Endothelial cell of umbilical vein (primary cell): ENCODE measurements at regions of chr17 and their contacts with region 1.

Region 1: GRCh38 chr17:20797292-20797691 is 217.8 kb downstream of the CDRT15L2 start:
- DNase-seq: no peak
- H3K4me3 ChIP-seq: no peak overlapping the region
- H3K27ac ChIP-seq: no peak overlapping the region
- H3K4me1 ChIP-seq: no peaks in the 10 kb centered on the region
- H3K27me3 ChIP-seq: no peaks in the 10 kb centered on the region
- CTCF ChIP-seq: no peak
- POLR2A ChIP-seq: no peak

Region 2: DNA sequence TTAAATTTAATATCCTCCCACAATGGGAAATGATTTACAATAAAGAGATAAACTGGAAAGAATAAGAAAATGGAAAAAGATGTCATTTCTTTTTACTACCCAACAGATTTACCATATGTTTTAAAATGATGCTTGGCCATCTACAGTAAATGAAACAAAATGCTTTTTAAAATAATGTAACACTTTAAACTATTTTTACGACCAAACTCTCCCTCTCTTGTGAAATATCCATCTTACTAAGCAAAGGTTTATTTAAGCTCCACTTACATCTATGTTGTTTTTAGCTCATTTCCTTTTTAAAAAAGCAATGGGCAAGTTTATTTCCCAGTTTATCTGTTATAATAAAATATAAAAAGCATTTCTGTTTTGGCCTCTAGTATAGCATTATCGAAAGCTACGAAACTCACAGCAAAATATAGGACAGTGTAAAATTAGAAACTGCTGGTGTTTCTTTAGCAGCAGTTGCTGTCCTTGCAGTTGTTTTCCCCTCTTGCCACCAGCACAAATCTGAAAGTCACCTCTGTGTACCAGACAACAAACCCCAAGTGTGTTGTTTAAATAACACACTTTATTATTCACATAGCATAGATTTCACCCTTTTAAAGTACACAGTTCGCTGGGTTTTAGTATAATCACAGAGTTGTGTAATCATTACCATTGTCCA is 22.7 kb before region 1 on chr17:
- CTCF ChIA-PET with region 1: no interaction called
- POLR2A ChIA-PET with region 1: no interaction called
- dilution Hi-C with region 1: no loop called
- intact Hi-C with region 1: no loop called
- DNase-seq: no peak
- H3K4me3 ChIP-seq: no peak overlapping the region
- H3K27ac ChIP-seq: no peak overlapping the region
- H3K4me1 ChIP-seq: no peaks in the 10 kb centered on the region
- H3K27me3 ChIP-seq: no peaks in the 10 kb centered on the region
- CTCF ChIP-seq: no peak
- POLR2A ChIP-seq: no peak

Region 3: GRCh38 chr17:20825539-20825938 is 28.2 kb after region 1 on chr17:
- CTCF ChIA-PET with region 1: no interaction called
- POLR2A ChIA-PET with region 1: no interaction called
- dilution Hi-C with region 1: no loop called
- intact Hi-C with region 1: no loop called
- DNase-seq: no peak
- H3K4me3 ChIP-seq: no peak overlapping the region
- H3K27ac ChIP-seq: no peak overlapping the region
- H3K4me1 ChIP-seq: no peaks in the 10 kb centered on the region
- H3K27me3 ChIP-seq: no peaks in the 10 kb centered on the region
- CTCF ChIP-seq: no peak
- POLR2A ChIP-seq: no peak

Region 4: DNA sequence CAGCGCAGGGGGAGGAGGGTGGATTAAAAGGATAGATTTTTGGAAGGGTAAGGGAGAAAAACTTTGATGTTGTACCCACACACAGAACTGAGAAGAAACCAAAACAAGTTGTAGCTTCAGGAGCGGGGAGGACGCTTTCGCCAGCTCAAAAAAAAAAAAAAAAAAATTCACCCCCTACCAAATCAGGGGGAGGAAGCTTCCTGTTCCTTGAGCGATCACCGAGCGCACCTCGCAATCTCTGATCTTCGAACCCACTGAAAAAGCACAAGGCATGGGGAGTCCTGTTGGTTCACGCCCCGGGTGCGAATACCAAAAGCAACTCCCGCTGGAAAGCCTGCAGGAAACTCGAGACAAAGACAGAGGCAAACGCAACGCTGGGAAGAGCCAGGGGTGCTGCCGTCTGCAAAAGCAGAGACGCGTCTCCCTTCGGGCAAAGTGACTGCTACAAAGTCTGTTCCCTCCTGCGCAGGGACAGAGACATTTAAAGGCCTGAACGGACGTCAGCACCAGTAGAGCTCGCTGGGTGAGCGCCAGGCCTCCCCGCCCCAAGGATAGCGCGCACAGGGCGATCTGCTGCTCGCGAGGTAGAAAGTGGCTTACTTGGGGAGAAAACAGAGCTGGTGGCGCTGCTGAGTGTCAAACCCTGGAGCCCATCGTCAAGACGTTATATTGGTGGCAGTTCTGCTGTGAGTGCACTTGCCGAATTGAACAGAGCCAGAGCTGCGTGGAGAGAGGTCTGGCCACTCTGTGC is 55.1 kb after region 1 on chr17:
- CTCF ChIA-PET with region 1: interaction called, 9 read pairs
- POLR2A ChIA-PET with region 1: no interaction called
- dilution Hi-C with region 1: no loop called
- intact Hi-C with region 1: loop called (anchors 1 kb)
- DNase-seq: no peak
- H3K4me3 ChIP-seq: no peak overlapping the region
- H3K27ac ChIP-seq: no peak overlapping the region
- H3K4me1 ChIP-seq: no peaks in the 10 kb centered on the region
- H3K27me3 ChIP-seq: peaks cover 19 to 30% of the 10 kb centered on the region in 2 experiments
- CTCF ChIP-seq: no peak
- POLR2A ChIP-seq: no peak

Region 5: DNA sequence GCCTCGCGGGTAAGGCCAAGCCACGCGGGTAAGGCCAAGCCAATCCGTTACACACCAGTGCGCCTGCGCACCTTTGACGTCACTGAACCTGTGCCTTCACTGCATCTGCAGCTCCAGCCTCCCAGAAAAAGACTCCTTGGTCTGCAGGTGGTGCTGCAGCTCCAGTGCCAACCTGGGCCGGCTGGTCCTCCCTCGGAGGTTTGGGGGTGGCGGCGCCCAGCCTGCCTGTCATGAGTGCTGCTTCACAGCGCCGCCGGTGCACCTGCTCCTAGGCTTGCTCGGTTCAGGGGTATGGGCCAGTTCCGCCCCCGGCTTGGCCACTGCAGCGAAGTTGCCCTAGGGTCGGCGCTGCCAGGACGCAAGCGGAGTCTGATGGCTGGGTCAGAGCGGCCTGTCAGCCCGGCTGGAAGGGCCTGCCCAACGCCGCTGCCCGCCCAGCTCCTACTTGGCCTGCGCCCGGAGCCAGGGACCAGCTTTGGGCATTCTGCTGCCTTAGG is 98.9 kb after region 1 on chr17:
- CTCF ChIA-PET with region 1: no interaction called
- POLR2A ChIA-PET with region 1: no interaction called
- dilution Hi-C with region 1: no loop called
- intact Hi-C with region 1: no loop called
- DNase-seq: peak; percentile 35
- H3K4me3 ChIP-seq: no peak overlapping the region
- H3K27ac ChIP-seq: no peak overlapping the region
- H3K4me1 ChIP-seq: no peaks in the 10 kb centered on the region
- H3K27me3 ChIP-seq: no peaks in the 10 kb centered on the region
- CTCF ChIP-seq: peak in 1 of 2 donors; percentile 17
- POLR2A ChIP-seq: no peak

Region 6: DNA sequence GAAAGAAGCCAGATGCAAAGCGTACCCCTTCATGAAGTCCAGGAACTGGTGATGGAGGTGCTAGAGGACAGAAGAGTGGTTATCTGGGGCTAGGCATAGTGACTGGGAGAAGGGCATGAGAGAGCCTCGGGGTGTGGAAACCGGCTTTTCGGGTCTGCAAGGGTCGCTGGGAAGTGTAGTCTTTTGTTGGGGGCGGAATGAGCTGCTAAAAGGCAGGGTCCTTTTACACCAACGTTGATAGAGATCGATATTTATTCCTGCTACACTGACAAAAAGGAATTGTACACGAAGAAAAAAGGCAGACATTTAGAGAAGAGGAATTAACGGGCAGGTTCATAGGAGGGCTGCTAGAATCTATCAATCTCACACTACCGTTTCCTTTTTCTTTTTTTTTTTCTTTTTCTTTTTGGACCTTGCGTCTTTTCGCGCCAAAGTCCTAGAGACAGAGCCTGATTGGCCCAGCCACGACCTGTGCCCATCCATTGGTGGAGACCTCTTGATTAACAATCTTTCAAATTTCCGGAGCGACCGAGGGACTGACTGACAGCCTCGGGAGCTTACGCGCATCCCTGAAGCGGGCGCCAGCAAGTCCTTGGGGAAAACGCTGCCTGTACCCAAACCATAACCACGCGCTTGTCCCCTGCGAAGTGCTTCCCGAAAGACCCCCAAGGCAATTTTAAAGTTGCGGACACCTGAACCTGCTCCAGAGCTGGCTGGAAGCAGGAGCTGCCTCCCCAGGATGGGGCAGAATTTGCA is 301.8 kb after region 1 on chr17:
- CTCF ChIA-PET with region 1: interaction called, 11 read pairs
- POLR2A ChIA-PET with region 1: no interaction called
- dilution Hi-C with region 1: no loop called
- intact Hi-C with region 1: loop called (anchors 10 kb)
- DNase-seq: peak; percentile 72
- H3K4me3 ChIP-seq: peak overlapping the region; percentile 39 to 82 (median 66)
- H3K27ac ChIP-seq: no peak overlapping the region
- H3K4me1 ChIP-seq: peaks cover 5% of the 10 kb centered on the region
- H3K27me3 ChIP-seq: peaks cover 0 to 2% of the 10 kb centered on the region in 2 experiments
- CTCF ChIP-seq: no peak
- POLR2A ChIP-seq: no peak